ENCODE measurements at regions of chr3 and their contacts with region 1.

Region 1: DNA sequence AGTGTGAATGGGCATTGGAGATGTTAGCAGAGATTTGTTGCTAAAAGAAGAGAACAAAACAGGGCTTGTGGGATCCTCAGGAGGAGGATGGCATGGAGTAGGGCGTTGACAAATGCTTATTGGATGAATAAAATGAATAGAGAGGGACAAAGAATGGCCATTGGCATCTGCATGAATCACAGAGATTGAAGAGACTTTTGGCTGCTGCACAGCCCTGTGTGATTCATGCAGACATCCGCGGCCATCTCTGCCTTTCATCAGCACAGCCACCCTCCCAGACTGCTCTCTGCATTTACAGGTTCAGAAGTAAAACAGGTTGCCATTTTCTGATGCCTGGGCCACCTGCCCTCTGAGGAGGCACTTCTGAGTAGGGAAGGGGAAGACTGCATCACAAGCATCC is 397.9 kb downstream of the EPHB1 start:
- DNase-seq: no peak
- ATAC-seq: no peak
- H3K4me3 ChIP-seq: no peak overlapping the region
- H3K27ac ChIP-seq: no peak overlapping the region
- H3K4me1 ChIP-seq: no peaks in the 10 kb centered on the region
- H3K27me3 ChIP-seq: no peaks in the 10 kb centered on the region
- CTCF ChIP-seq: no peak
- POLR2A ChIP-seq: no peak

Region 2: GRCh38 chr3:135310317-135310716 is 117.4 kb after region 1 on chr3:
- intact Hi-C with region 1: loop called (anchors 5 kb)
- DNase-seq: no peak
- ATAC-seq: no peak
- H3K4me3 ChIP-seq: no peak overlapping the region
- H3K27ac ChIP-seq: no peak overlapping the region
- H3K4me1 ChIP-seq: no peaks in the 10 kb centered on the region
- H3K27me3 ChIP-seq: no peaks in the 10 kb centered on the region
- CTCF ChIP-seq: no peak
- POLR2A ChIP-seq: no peak

Measured in body of pancreas (tissue), 4 donors.